AG04449 (cell line): ENCODE measurements at regions of chr6 and their contacts with region 1.

Region 1: GRCh38 chr6:85642774-85643536 is at the start of gene SYNCRIP:
- DNase-seq: peak; percentile 86
- H3K4me3 ChIP-seq: peak within 1 kb of the TSS; percentile 99
- CTCF ChIP-seq: no peak

Region 2: DNA sequence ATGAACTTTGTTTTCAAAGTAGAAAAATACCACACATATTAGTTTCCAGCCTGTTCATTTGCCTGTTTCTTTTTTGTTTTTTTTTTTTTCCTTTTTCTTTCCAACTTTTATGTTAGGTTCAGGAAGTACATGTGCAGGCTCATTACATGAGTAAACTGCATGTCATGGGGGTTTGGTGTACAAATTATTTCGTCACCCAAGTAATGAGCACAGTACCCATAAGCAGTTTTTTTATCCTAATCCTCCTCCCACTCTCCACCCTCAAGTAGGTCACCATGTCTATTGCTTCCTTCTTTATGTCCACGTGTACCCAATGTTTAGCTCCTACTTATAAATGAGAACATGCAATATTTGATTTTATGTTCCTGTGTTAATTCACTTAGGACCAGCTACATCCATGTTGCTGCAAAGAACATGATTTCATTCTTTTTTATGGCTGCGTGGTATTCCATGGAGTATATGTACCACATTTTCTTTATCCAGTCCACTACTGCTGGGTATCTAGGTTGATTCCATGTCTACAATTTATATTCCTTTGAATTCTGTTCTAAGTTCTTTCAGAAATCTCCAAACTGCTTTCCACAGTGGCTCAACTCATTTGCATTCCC is 81.1 kb before region 1 on chr6:
- CTCF ChIA-PET with region 1: no interaction called
- POLR2A ChIA-PET with region 1: no interaction called
- DNase-seq: no peak
- H3K4me3 ChIP-seq: no peak overlapping the region
- CTCF ChIP-seq: no peak

Region 3: DNA sequence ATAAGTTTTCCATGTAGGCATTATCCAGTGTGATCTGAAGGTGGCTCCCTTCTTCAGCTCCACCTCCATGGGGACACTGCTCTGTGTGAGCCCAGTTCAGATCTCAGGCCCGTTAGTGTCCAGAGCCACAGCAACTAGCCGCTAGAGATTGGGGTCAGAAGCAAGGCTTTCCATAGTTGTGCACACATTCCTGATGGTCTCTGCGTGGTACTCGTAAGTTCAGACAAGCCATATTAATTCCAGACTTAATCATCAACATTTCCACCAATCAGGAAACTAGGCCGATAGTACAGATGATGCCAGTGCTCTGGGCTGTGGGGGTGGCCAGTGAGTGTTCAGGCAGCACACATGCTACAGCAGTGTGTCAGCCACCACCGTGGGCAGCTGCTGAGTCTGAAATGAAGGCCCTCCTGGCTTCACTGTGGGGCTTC is 17.2 kb after region 1 on chr6:
- CTCF ChIA-PET with region 1: interaction called, 3 read pairs
- POLR2A ChIA-PET with region 1: interaction called, 18 read pairs
- DNase-seq: peak; percentile 87
- H3K4me3 ChIP-seq: peak overlapping the region; percentile 32; the same call in 1 of the 2 replicates
- CTCF ChIP-seq: peak; percentile 14

Region 4: DNA sequence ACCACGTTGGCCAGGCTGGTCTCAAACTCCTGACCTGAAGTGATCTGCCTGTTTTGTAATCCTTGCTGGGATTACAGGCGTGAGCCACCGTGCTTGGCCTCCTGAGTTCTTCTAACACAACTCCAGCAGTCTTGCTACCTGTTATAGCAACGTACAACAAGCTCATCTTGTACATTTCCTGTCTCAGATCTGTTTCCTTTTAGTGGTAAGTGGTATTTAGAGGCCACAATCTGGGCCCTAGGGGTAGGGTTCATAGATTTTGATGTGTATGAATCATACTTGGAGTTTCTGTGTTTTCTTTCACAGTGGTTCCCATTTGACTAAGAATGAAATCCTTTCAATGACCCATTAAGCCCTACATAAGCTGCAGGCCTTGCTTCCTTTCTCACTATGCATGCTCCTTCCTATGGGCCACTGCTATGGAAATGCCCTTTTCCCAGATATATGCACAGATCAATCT is 26.8 kb after region 1 on chr6:
- CTCF ChIA-PET with region 1: interaction called, 4 read pairs
- POLR2A ChIA-PET with region 1: interaction called, 337 read pairs
- DNase-seq: no peak
- H3K4me3 ChIP-seq: no peak overlapping the region
- CTCF ChIP-seq: no peak

Region 5: GRCh38 chr6:85756982-85757381 is 114.0 kb after region 1 on chr6:
- CTCF ChIA-PET with region 1: no interaction called
- POLR2A ChIA-PET with region 1: no interaction called
- DNase-seq: no peak
- H3K4me3 ChIP-seq: no peak overlapping the region
- CTCF ChIP-seq: no peak

Region 6: DNA sequence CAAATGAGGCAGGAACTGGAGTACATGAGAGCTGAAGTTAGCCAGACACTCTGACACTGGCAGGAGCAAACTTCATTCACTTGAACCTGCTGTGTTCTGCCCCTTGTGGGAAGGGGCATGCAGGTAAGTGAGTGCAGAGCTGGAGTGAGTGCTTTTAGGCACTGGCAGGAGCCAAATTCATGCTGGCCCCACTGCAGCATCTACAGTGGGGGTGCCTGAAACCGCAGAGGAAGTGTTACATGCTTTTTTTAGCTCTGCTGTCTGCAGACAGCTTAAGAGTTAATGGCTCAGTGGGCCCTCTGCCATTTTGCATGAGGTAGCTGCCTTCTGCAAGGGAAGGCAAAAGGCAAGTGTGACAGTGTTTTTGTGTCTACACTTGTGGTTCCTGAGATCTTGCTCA is 167.6 kb after region 1 on chr6:
- CTCF ChIA-PET with region 1: no interaction called
- POLR2A ChIA-PET with region 1: no interaction called
- DNase-seq: no peak
- H3K4me3 ChIP-seq: no peak overlapping the region
- CTCF ChIP-seq: no peak